ENCODE measurements at regions of chr19 and their contacts with region 1.

Region 1: GRCh38 chr19:39110263-39110967 is 15.2 kb upstream of the PAK4 start:
- DNase-seq: peak; percentile 72 to 95
- ATAC-seq: peak; percentile 47 to 73; a peak in 5 of 6 replicates
- H3K4me3 ChIP-seq: no peak overlapping the region
- H3K27ac ChIP-seq: peak overlapping the region; percentile 89 to 90
- H3K4me1 ChIP-seq: peaks cover 40% of the 10 kb centered on the region
- CTCF ChIP-seq: peak; percentile 99
- EP300 ChIP-seq: no peak
- POLR2A ChIP-seq: no peak
- RAD21 ChIP-seq: peak; percentile 91

Region 2: GRCh38 chr19:38959618-38960017 is 150.8 kb before region 1 on chr19:
- CTCF ChIA-PET with region 1: interaction called, 38 read pairs
- POLR2A ChIA-PET with region 1: no interaction called
- DNase-seq: no peak
- ATAC-seq: no peak
- H3K4me3 ChIP-seq: no peak overlapping the region
- H3K27ac ChIP-seq: no peak overlapping the region
- H3K4me1 ChIP-seq: peaks cover 11% of the 10 kb centered on the region
- CTCF ChIP-seq: no peak
- EP300 ChIP-seq: no peak
- POLR2A ChIP-seq: no peak
- RAD21 ChIP-seq: no peak

Region 3: DNA sequence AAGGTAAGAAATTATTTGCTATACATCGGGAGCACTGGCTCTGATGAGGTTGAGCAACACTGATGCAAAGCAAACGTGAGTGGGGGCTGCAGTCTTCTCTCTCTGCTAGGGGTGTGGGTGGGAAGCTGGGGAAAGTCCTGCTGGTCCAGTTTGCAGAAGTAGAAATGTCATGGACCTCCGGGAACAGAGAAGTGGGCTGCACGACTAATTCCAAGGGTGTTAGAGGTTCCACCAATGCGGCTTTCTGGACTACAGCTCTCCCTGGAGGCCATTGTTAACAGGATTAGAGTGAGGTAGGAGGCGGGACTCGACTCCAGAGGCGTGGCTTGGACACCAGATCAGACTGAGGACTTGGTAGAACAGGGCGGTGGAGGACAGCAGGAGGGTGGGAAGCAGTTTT is 72.3 kb before region 1 on chr19:
- CTCF ChIA-PET with region 1: interaction called, 33 read pairs
- POLR2A ChIA-PET with region 1: interaction called, 3 read pairs
- DNase-seq: peak; percentile 82 to 99
- ATAC-seq: peak; percentile 98 to 99
- H3K4me3 ChIP-seq: no peak overlapping the region
- H3K27ac ChIP-seq: peak overlapping the region in 1 of 2 experiments; percentile 38; a peak in 1 of 6 replicates
- H3K4me1 ChIP-seq: peaks cover 8% of the 10 kb centered on the region
- CTCF ChIP-seq: peak; percentile 48; the same call in 2 of the 3 replicates
- EP300 ChIP-seq: no peak
- POLR2A ChIP-seq: no peak
- RAD21 ChIP-seq: peak; percentile 71 to 77

Region 4: DNA sequence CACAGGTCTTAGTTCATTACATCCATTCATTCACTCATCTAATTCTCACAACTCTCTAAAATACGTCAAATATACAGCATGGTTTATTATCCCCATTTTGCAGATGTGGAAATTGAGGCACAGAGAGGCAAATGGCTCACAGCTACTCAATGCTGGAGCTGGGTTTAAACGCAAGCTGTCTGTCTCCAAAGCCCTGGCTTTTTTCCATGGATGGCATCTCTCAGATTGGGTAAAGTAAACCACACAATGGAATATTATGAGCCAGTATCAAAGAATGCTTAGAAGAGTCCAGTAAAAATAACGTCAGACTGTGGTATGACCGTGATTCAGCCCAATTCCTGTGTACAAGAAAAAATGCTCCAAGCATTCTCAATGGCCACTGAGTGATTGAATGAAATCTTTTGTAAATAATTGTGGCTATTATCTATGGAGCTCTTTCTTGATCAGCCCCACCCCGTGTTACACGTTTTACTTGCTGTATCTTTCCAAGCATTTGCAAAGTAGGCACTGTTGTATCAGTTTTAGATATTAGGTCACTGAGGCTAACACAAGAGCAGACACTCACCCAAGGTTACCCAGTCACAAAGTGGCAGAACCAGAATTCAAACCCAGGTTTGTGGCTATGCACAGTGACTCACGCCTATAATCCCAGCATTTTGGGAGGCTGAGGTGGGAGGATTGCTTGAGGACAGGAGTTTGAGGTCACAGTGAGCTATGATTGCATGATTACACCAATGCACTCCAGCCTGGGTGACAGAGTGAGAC is 31.8 kb before region 1 on chr19:
- CTCF ChIA-PET with region 1: interaction called, 429 read pairs
- POLR2A ChIA-PET with region 1: interaction called, 16 read pairs
- DNase-seq: peak; percentile 94 to 96
- ATAC-seq: peak; percentile 83 to 86
- H3K4me3 ChIP-seq: no peak overlapping the region
- H3K27ac ChIP-seq: peak overlapping the region; percentile 84 to 86
- H3K4me1 ChIP-seq: peaks cover 56% of the 10 kb centered on the region
- CTCF ChIP-seq: no peak
- EP300 ChIP-seq: peak; percentile 95 to 97; a peak in 4 of 5 replicates
- POLR2A ChIP-seq: no peak
- RAD21 ChIP-seq: no peak; a peak in 1 of 5 replicates

Region 5: DNA sequence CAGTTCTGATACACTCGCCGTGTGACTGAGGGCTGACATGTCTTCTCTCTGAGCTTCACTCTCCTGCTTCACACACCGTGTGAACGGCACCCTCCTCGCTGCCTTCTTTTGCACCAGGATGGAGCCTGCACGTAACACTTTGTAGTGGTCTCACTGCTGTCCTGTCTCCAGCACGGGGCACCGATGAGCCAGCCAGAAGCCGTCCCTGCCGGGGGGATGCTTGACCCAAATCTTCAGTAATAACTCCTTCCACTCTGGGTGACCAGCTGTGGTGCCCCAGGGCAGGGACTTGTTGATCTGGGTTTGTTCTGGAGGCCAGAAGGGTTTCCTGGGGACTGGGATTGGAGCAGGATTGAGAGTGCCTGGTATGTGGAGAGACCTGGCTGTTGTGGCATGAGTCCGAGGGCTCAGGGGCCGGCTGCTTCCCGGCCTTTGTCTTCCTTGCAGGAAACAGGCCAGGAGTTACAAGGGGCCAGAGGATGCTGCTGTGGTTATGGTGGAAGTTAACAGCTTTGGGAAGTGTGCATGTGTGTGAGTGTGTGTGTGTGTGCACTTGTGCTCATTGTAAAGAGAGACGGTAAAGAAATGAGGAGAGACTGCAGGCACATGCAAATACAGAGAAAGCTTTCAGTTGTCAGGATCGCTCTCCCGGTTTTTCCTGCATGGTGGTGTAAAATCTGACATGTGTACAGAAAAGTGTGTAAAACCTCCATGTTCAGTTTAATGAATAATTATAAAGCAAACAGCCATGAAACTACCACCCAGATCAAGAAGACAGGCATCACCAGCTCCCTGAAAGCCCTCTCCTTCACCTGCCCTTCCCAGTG is 34.0 kb after region 1 on chr19:
- CTCF ChIA-PET with region 1: interaction called, 20 read pairs
- POLR2A ChIA-PET with region 1: no interaction called
- DNase-seq: no peak
- ATAC-seq: peak; percentile 45 to 65
- H3K4me3 ChIP-seq: no peak overlapping the region
- H3K27ac ChIP-seq: peak overlapping the region in 1 of 2 experiments; percentile 53; a peak in 3 of 6 replicates
- H3K4me1 ChIP-seq: peaks cover 30% of the 10 kb centered on the region
- CTCF ChIP-seq: no peak
- EP300 ChIP-seq: no peak
- POLR2A ChIP-seq: no peak
- RAD21 ChIP-seq: no peak

Region 6: GRCh38 chr19:39193803-39194202 is 83.4 kb after region 1 on chr19:
- CTCF ChIA-PET with region 1: interaction called, 12 read pairs
- POLR2A ChIA-PET with region 1: no interaction called
- DNase-seq: peak; percentile 84 to 92
- ATAC-seq: peak; percentile 67 to 82
- H3K4me3 ChIP-seq: no peak overlapping the region
- H3K27ac ChIP-seq: peak overlapping the region; percentile 45 to 71
- H3K4me1 ChIP-seq: peaks cover 55% of the 10 kb centered on the region
- CTCF ChIP-seq: no peak
- EP300 ChIP-seq: peak in 1 of 2 experiments; percentile 49; a peak in 1 of 5 replicates
- POLR2A ChIP-seq: peak; percentile 16; the same call in 1 of the 2 replicates
- RAD21 ChIP-seq: no peak; a peak in 1 of 5 replicates

Region 7: DNA sequence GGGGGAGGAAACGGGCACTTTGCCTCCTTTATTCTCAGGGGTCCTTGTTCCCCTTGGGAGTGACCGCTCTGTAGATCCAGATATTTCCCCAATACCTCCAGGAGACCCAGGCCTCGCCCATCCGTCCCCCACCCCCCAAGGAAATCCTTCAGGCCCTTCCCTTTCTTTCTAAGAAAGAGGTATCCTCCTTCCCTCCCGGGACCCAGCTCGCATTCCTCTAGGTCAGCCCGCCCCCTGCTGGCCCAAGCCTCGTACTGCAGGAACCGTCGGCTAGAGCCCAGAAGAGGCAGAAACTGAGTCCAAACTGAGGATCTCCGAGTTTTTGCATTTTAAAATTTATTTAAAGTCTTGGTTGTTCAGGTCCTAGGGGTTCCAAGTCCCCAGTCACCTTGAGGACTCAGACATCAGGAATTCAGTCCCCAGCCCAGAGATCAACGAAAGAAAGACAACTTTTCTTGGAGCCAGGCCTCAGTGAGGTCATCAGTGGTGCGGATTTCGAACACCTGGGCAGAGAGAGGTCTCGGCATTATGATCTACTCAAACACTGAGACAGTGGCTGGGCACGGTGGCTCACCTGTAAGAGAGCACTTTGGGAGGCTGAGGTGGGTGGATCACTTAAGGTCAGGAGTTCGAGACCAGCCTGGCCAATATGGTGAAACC is 217.8 kb after region 1 on chr19:
- CTCF ChIA-PET with region 1: interaction called, 116 read pairs
- POLR2A ChIA-PET with region 1: interaction called, 5 read pairs
- DNase-seq: peak; percentile 83 to 97
- ATAC-seq: peak; percentile 74 to 83
- H3K4me3 ChIP-seq: no peak overlapping the region
- H3K27ac ChIP-seq: peak overlapping the region in 1 of 2 experiments; percentile 19; a peak in 2 of 6 replicates
- H3K4me1 ChIP-seq: peaks cover 10% of the 10 kb centered on the region; the same call in 1 of the 3 replicates
- CTCF ChIP-seq: peak; percentile 100
- EP300 ChIP-seq: no peak
- POLR2A ChIP-seq: no peak
- RAD21 ChIP-seq: peak; percentile 100